ENCODE measurements at regions of chr5 and their contacts with region 1.

Region 1: DNA sequence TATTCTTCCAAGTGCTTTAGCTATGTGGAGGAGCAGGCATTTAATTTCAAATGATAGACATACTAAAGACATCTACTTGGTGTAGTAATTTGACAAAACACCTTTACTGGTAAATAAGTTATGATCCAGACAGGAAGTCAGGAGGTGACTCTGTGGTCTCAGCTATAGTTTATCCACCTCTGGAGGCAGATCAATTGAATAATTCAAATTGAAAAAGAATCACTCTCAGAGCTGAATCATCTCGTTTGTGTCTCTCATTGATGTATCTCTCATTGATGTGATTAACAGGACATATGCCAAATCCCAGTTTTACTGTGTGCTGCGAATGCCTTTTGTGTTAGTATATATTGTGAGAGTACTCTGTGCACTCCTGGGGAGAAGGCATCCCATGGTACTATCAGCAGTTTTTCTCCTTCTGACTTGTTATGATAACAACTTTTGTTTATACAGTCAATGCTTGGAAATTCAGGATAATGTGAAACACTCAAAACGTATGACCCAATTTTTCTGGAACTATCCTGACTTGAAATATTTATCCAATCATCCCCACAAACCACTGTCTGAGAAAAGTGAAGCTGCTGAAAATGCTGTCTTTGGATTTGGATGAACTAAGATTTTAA is 48.5 kb upstream of the DAB2 start:
- DNase-seq: no peak
- ATAC-seq: no peak
- H3K4me3 ChIP-seq: no peak overlapping the region
- H3K4me3 Mint-ChIP-seq: no peak overlapping the region
- H3K27ac ChIP-seq: no peak overlapping the region
- H3K27ac Mint-ChIP-seq: no peak overlapping the region
- H3K4me1 ChIP-seq: no peaks in the 10 kb centered on the region
- H3K4me1 Mint-ChIP-seq: no peaks in the 10 kb centered on the region
- H3K27me3 ChIP-seq: no peaks in the 10 kb centered on the region
- H3K27me3 Mint-ChIP-seq: no peaks in the 10 kb centered on the region
- CTCF ChIP-seq: no peak

Region 2: GRCh38 chr5:38463634-38464521 is 1009.4 kb before region 1 on chr5:
- CTCF ChIA-PET with region 1: no interaction called
- POLR2A ChIA-PET with region 1: no interaction called
- intact Hi-C with region 1: loop called in 1 of 2 experiments (anchors 5 kb)
- DNase-seq: no peak
- ATAC-seq: no peak
- H3K4me3 ChIP-seq: no peak overlapping the region
- H3K4me3 Mint-ChIP-seq: no peak overlapping the region
- H3K27ac ChIP-seq: no peak overlapping the region
- H3K27ac Mint-ChIP-seq: no peak overlapping the region
- H3K4me1 ChIP-seq: no peaks in the 10 kb centered on the region
- H3K4me1 Mint-ChIP-seq: no peaks in the 10 kb centered on the region
- H3K27me3 ChIP-seq: peaks cover 11 to 13% of the 10 kb centered on the region in 2 experiments
- H3K27me3 Mint-ChIP-seq: peaks cover 42% of the 10 kb centered on the region
- CTCF ChIP-seq: no peak